ENCODE measurements at regions of chr14 and their contacts with region 1.

Region 1: GRCh38 chr14:50321009-50321660 is 9.0 kb downstream of the DMAC2L start:
- DNase-seq: peak in 2 of 3 donors; percentile 45 to 65
- ATAC-seq: peak; percentile 95 to 97
- H3K4me3 ChIP-seq: peak overlapping the region; percentile 26
- H3K27ac ChIP-seq: peak overlapping the region; percentile 39
- H3K4me1 ChIP-seq: no peaks in the 10 kb centered on the region
- H3K27me3 ChIP-seq: no peaks in the 10 kb centered on the region

Region 2: GRCh38 chr14:50148799-50149198 is 172.3 kb before region 1 on chr14:
- intact Hi-C with region 1: no loop called
- DNase-seq: no peak
- ATAC-seq: no peak
- H3K4me3 ChIP-seq: no peak overlapping the region
- H3K27ac ChIP-seq: no peak overlapping the region
- H3K4me1 ChIP-seq: no peaks in the 10 kb centered on the region
- H3K27me3 ChIP-seq: no peaks in the 10 kb centered on the region

Region 3: GRCh38 chr14:50210074-50210473 is 111.1 kb before region 1 on chr14:
- intact Hi-C with region 1: no loop called
- DNase-seq: no peak
- ATAC-seq: no peak
- H3K4me3 ChIP-seq: no peak overlapping the region
- H3K27ac ChIP-seq: no peak overlapping the region
- H3K4me1 ChIP-seq: peaks cover 6% of the 10 kb centered on the region
- H3K27me3 ChIP-seq: no peaks in the 10 kb centered on the region

Region 4: DNA sequence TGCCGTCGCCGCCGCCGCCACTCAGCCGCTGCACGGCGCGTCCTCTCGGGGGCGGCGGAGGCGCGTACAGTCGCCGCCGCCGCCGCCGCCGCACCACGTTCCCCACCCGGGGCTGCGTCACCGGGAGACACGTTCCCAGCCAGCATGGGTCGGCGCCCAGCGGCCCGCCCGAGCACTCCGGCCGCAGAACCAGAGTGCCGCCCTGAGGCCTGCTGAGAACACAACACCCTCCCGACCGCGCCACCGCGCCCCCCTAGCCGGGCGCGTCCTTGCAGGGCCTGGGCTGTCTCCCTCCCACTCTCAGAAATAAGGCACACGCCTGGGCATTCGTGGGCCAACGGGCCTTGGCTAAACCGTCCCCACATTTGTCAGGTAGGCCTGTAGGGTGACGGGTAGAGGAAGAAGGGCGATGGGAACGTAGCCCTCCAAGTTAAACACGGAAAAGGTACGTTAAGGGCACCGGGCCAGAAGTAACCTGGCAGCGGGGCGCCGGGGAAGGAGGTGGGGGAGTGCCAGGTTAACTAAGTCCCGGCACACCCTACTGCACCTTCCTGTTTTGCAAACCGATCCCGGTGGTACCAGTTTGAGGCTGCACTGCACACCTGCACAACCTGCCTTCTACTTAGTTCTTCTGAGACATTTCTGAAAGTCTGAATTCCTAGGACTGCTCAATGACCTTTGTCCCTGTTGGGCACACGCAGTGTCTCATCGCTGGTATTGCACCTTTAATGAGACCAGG is 211.5 kb after region 1 on chr14 and contains the start of gene MAP4K5:
- intact Hi-C with region 1: loop called (anchors 2 to 5 kb)
- DNase-seq: peak; percentile 94 to 97 (median 96)
- ATAC-seq: peak; percentile 99
- H3K4me3 ChIP-seq: peak within 1 kb of the TSS; percentile 62
- H3K27ac ChIP-seq: peak within 1 kb of the TSS; percentile 66
- H3K4me1 ChIP-seq: no peaks in the 10 kb centered on the region
- H3K27me3 ChIP-seq: no peaks in the 10 kb centered on the region
- total RNA-seq, gene MAP4K5: 17.6 to 29.0 (median 21.0) TPM